ENCODE measurements at regions of chr5 and their contacts with region 1.

Region 1: GRCh38 chr5:132526290-132526973 is 16.9 kb downstream of the IL5 start:
- DNase-seq: peak; percentile 61
- CTCF ChIP-seq: peak; percentile 64

Region 2: DNA sequence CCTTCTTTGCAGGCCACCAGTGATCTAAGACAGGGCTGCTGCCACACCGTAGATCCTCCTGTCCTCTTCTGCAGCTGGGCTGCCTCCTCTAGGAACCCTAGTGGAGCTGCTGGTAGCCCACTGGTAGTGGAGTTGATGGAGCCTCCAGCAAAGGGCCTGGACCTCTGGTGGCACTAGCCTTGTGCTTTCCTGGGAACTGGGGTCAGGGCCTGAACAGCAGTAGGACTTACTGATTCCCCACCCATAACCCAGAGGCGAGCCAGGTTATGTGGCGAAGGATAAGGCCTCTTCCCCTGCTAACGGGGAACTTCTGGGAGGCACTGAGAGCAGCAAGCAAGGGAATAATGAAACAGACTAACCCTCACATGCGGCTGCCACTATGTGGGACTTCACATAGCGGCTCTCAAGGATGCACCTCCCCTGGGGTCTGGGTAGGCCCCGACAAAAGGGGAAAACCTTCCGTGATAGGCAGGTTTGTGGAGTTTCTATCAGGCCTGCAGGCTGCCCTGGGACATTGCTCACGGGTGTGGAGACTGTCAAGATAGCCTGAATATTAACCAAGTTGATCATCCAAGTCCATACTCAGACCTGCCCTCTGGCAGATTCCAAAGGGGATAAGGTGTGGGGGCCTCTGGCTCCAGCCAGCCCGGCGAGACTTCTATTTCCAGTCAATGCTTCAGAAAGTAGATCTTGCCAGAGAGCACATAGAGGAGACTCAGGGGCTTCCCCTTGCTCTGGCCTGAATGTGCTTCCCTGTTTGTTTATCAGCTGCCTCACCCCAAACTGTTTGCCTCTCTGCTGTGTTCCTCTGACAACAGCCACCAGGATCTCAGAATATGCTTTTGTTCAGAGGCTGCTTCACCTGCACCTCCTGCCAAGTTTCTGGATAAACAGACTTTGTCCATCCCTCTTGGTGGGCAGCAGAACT is 224.8 kb before region 1 on chr5:
- CTCF ChIA-PET with region 1: no interaction called
- POLR2A ChIA-PET with region 1: no interaction called
- DNase-seq: no peak
- CTCF ChIP-seq: no peak

Region 3: GRCh38 chr5:132495667-132496190 is 30.7 kb before region 1 on chr5:
- CTCF ChIA-PET with region 1: interaction called, 47 read pairs
- POLR2A ChIA-PET with region 1: no interaction called
- DNase-seq: peak; percentile 83
- CTCF ChIP-seq: peak; percentile 0

Region 4: DNA sequence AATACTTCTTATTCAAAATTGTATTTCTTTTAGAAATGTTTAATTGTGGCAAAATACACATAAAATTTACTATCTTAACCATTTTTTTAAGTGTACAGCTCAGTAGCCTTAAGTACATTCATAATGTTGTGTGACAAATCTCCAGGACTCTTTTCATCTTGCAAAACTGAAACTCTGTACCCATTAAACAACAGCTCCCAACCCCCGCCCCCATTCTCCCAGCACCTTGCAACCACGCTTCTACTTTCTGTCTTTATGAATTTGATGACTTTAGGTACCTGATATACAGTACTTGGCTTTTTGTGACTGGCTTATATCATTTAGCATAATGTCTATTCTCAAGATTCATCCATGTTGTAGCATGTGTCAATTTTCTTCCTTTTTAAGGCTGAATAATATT is 19.7 kb after region 1 on chr5:
- CTCF ChIA-PET with region 1: interaction called, 29 read pairs
- POLR2A ChIA-PET with region 1: no interaction called
- DNase-seq: no peak
- CTCF ChIP-seq: no peak

Region 5: DNA sequence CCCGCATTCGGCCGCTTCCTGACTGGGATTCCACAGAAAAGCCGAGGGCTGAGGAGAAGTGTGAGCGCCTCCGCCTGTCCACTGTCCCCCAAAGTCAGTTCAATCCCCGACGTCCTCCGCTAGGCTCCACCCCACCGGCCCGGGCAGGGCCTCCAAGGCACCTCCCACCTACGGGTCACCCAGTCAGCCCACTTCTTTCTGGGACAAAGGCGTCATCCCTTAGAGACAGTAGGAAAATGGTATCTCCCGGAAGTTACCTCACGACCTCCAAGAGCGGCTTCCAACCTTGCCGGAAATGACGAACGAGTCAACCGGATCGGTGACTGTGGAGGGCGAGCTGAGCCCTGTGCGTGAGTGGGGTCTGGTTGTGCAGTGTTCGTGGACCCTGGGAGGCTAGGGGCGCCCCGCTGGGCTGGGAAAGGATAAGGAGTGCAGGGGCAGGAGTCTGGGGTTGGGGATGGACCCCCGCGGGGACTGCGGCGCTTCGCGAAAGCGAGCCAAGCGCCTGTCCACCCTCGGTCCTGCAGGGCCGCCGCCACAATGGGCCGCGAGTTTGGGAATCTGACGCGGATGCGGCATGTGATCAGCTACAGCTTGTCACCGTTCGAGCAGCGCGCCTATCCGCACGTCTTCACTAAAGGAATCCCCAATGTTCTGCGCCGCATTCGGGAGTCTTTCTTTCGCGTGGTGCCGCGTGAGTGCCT is 340.1 kb after region 1 on chr5 and contains the starts of genes GDF9 and UQCRQ:
- CTCF ChIA-PET with region 1: interaction called, 10 read pairs
- POLR2A ChIA-PET with region 1: no interaction called
- DNase-seq: peak; percentile 98
- CTCF ChIP-seq: no peak

Region 6: DNA sequence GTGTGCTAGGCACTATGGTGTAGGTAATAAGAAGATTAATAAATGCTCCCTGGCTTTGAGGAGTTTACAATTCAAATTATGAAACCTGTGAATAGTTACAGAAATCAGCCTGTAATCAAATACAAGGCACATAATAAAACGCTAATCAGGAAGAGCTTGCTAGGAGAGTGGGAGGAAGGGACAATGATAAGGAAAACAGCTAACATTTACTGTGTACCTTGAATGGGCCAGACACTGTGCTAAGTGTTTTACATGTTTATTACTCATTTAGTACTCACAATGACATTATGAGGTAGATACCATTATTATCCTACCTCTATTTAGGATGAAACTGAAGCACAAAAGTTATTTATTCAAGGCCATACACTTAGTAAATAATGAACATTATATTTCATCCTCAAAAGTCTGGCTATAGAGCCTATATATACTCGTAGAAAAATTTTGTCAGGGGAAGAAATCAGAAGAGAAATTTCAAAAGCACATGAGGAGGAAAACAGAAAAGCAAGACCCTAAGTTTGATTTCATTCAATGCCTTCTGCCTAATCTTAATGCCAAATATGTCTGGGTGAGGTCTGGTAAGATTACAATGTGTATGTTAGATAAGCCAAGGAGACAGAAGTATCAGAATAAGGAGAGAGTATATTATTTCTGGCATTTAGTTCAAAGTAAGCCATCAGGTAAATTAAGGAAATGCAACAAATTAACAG is 401.1 kb after region 1 on chr5:
- CTCF ChIA-PET with region 1: no interaction called
- POLR2A ChIA-PET with region 1: no interaction called
- DNase-seq: no peak
- CTCF ChIP-seq: no peak

Measured in GM10248 (cell line).